ENCODE measurements at regions of chr1 and their contacts with region 1.

Region 1: GRCh38 chr1:201436393-201436792 is 14.9 kb upstream of the TNNI1 start:
- DNase-seq: peak; percentile 48
- H3K4me3 Mint-ChIP-seq: no peak overlapping the region
- H3K27ac Mint-ChIP-seq: no peak overlapping the region
- H3K4me1 Mint-ChIP-seq: peaks cover 26% of the 10 kb centered on the region
- H3K27me3 Mint-ChIP-seq: peaks cover 3% of the 10 kb centered on the region
- CTCF ChIP-seq: no peak

Region 2: GRCh38 chr1:201295861-201296260 is 140.5 kb before region 1 on chr1:
- CTCF ChIA-PET with region 1: no interaction called
- intact Hi-C with region 1: no loop called
- DNase-seq: no peak
- H3K4me3 Mint-ChIP-seq: no peak overlapping the region
- H3K27ac Mint-ChIP-seq: no peak overlapping the region
- H3K4me1 Mint-ChIP-seq: peaks cover 29% of the 10 kb centered on the region
- H3K27me3 Mint-ChIP-seq: peaks cover 25% of the 10 kb centered on the region
- CTCF ChIP-seq: no peak

Region 3: DNA sequence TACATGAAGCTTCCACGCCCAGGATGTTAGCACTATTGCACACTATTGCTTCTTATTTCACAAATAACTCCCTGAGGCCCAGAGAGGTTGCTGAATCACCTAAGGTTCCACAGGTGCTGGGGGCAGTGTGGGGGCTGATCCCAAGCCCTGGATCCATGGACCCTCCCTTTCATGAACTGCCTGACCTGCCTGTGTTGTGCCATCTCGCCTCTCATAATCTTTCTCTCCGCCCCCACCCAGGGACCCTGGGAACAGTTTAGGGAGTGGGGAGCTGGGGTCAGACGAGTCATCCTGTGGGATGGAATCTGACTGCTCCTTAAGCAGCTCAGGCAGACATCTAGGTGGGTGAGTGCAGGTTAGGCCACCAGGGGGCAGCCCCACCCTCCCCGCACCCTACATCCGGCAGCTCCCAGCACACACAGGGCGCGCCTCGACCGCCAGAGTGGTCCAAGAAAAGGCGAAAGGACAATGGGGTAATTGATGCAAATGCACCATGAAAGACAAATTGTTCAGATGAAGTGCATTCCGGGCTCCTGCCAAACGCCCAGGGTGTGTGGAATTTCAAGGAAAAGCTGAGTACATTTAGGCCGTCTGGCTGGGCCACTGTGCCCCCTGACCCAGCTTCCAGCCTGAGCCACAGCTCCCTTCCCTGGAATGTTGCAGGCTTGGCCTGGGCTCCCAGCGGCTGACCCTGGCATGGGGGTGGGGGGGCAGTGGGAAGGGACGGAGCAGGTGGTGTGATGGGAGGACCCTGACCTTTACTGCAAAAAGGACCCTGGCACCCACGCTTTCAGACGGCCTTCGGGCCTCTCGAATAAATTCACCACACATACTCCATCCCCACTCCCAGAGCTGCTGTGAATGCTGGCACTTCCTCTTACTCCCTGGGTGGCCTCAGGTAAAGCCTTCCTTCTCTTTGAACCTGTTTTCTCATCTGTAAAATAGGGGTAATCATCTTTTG is 11.8 kb after region 1 on chr1:
- CTCF ChIA-PET with region 1: interaction called, 40 read pairs
- intact Hi-C with region 1: no loop called
- DNase-seq: peak; percentile 88
- H3K4me3 Mint-ChIP-seq: no peak overlapping the region
- H3K27ac Mint-ChIP-seq: peak overlapping the region; percentile 29
- H3K4me1 Mint-ChIP-seq: peaks cover 46% of the 10 kb centered on the region
- H3K27me3 Mint-ChIP-seq: no peaks in the 10 kb centered on the region
- CTCF ChIP-seq: peak; percentile 91

Region 4: DNA sequence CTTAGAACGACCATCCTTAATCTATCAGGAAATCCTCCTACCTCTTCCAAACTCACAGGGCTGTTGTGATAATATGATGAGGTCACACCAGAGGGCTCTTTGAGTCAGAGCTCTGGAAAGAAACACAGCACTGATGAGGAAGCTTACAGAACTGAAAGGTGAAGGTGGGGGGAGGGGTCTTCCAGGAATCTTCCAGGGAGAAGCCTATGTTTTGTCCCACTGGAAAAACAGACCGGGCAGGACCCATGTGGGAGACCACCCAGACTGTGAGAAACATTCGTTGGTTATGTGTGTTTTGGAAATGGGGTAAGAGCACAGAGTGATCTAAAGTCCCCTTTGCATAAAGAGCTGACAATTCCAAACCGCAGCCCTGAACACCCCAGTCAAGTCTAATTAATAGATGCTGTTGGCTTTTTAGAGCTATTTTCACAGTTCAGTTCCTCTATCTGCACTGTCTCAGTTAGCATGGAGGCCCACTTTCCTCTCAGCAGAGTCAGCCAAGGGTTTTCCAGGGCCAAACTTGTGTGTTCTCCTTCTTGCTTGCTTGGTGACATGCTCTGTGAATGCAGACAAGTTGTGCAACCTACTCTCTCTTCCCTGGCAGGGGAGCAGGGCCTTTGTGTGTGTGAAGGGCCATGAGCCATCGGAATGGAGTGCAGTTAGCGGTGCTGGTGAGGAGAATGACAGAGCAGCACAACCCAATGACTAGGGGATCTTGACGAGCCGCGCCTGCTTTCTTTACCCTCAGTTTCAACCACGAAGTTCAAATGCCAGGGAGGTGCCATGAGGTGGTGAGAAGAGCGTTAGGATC is 20.3 kb after region 1 on chr1:
- CTCF ChIA-PET with region 1: interaction called, 14 read pairs
- intact Hi-C with region 1: no loop called
- DNase-seq: no peak
- H3K4me3 Mint-ChIP-seq: peak overlapping the region; percentile 13
- H3K27ac Mint-ChIP-seq: peak overlapping the region; percentile 50
- H3K4me1 Mint-ChIP-seq: peaks cover 46% of the 10 kb centered on the region
- H3K27me3 Mint-ChIP-seq: no peaks in the 10 kb centered on the region
- CTCF ChIP-seq: no peak

Region 5: DNA sequence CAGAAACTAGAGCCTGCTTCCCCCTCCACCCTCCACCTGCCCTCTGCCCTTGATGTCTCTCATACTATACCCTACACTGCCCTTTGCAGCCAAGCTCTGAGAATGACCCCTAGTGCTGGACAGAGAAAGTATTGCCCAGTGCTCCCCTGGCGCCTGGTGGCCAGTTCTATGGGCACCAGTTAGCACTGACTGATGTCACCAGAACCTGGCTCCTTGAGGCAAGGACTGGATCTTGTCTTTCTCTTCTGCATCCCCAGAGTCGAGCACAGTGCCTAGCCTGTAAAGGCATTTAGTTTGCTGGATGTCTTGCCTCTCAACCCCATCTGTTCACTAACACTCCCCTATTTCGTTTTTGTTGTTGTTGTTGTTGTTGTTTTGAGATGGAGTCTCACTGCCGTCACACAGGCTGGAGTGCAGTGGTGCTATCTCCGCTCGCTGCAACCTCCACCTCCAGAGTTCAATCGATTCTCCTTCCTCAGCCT is 26.7 kb after region 1 on chr1:
- CTCF ChIA-PET with region 1: interaction called, 14 read pairs
- intact Hi-C with region 1: no loop called
- DNase-seq: no peak
- H3K4me3 Mint-ChIP-seq: peak overlapping the region; percentile 27
- H3K27ac Mint-ChIP-seq: peak overlapping the region; percentile 96
- H3K4me1 Mint-ChIP-seq: peaks cover 81% of the 10 kb centered on the region
- H3K27me3 Mint-ChIP-seq: no peaks in the 10 kb centered on the region
- CTCF ChIP-seq: peak; percentile 37

Region 6: GRCh38 chr1:201468844-201469511 is 32.6 kb after region 1 on chr1 and contains the start of gene PHLDA3:
- CTCF ChIA-PET with region 1: interaction called, 13 read pairs
- intact Hi-C with region 1: no loop called
- DNase-seq: peak; percentile 82
- H3K4me3 Mint-ChIP-seq: peak within 1 kb of the TSS; percentile 85
- H3K27ac Mint-ChIP-seq: peak within 1 kb of the TSS; percentile 61
- H3K4me1 Mint-ChIP-seq: peaks cover 37% of the 10 kb centered on the region
- H3K27me3 Mint-ChIP-seq: no peaks in the 10 kb centered on the region
- CTCF ChIP-seq: peak; percentile 21
- total RNA-seq, gene PHLDA3: 31.1 and 36.7 TPM in 2 replicates

Region 7: DNA sequence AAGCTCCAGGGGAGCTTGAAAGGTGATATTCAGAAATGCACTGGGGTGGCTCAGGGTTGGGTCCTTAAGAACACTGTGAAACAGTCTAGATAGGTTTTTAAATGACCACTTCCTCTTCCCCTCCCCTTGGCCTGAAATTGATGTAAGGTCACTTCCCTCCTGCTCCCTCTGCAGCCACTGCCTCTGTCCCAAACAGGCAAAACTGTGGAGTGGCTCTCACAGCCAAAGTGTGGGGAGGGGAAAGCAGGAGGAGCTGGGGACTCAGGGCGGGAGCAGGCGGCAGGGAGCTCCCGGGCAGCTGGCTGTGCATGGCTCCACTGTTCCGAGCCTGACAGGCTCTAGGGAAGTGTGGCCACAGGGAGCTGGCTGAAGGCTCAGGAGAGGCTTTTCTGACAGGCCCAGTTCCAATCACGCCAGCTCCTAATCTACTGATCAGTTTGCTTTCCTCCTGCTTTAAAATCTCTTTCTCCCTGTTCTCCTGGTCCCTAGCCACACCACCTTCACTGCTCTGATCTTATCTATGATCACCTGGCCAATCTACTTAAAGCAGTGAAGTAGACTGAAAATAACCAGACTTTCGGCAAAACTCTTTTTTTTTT is 75.6 kb after region 1 on chr1:
- CTCF ChIA-PET with region 1: interaction called, 37 read pairs
- intact Hi-C with region 1: no loop called
- DNase-seq: no peak
- H3K4me3 Mint-ChIP-seq: no peak overlapping the region
- H3K27ac Mint-ChIP-seq: no peak overlapping the region
- H3K4me1 Mint-ChIP-seq: peaks cover 46% of the 10 kb centered on the region
- H3K27me3 Mint-ChIP-seq: no peaks in the 10 kb centered on the region
- CTCF ChIP-seq: no peak

Measured in Calu3 (cell line).